ENCODE measurements at regions of chr3 and their contacts with region 1.

Region 1: GRCh38 chr3:112437146-112438022 is 61.9 kb downstream of the BTLA start:
- DNase-seq: peak in 2 of 4 experiments; percentile 4 to 12
- ATAC-seq: peak; percentile 85
- H3K4me3 ChIP-seq: no peak overlapping the region
- H3K27ac ChIP-seq: no peak overlapping the region
- H3K4me1 ChIP-seq: no peaks in the 10 kb centered on the region
- H3K27me3 ChIP-seq: no peaks in the 10 kb centered on the region
- CTCF ChIP-seq: peak; percentile 41 to 52 (median 51); a peak in 5 of 6 replicates
- EP300 ChIP-seq: no peak
- POLR2A ChIP-seq: no peak
- RAD21 ChIP-seq: peak in 1 of 2 experiments; percentile 49; a peak in 2 of 4 replicates

Region 2: GRCh38 chr3:112111785-112112402 is 325.5 kb before region 1 on chr3:
- CTCF ChIA-PET with region 1: no interaction called
- POLR2A ChIA-PET with region 1: no interaction called
- in situ Hi-C with region 1: no loop called
- intact Hi-C with region 1: loop called (anchors 5 kb)
- DNase-seq: peak; percentile 47 to 54 (median 50)
- ATAC-seq: peak; percentile 93
- H3K4me3 ChIP-seq: no peak overlapping the region
- H3K27ac ChIP-seq: no peak overlapping the region
- H3K4me1 ChIP-seq: no peaks in the 10 kb centered on the region
- H3K27me3 ChIP-seq: no peaks in the 10 kb centered on the region
- CTCF ChIP-seq: peak; percentile 57 to 72 (median 71)
- EP300 ChIP-seq: no peak
- POLR2A ChIP-seq: no peak
- RAD21 ChIP-seq: peak; percentile 66 to 70

Region 3: DNA sequence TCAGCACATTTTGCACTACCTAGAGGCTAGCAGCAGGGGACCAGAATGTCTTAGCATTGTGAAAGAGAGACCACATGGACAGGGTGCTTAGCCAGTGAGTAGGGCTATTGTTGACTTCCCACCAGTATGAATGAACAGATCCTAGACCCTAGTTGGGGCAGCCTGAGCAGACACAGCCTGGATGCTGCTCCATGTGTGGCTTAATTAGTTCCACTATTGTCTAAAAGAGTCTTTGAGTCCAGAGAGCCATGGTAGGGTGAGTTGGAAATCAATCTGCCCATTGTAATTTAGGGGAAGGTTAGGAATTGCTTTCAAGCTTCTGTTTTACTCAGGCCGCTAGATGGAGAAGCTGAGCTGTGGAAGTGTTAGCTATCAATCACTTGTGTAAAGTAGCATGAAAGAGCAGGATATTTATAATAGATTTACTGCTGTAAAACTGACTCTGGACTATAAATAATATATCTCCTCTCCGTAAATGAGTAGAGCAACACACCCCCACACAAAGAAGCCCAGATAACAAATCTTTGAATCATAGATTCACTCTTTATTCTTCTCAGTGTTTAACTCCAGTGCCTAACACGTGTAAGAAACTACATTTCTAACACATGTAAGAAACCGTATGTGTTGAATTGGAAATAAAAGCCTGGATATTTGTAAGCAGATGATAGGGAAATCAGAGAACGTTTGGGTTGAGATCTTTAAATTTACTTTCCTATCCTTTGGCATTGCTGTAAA is 300.3 kb before region 1 on chr3:
- CTCF ChIA-PET with region 1: no interaction called
- POLR2A ChIA-PET with region 1: no interaction called
- in situ Hi-C with region 1: no loop called
- intact Hi-C with region 1: loop called (anchors 2 kb)
- DNase-seq: peak in 2 of 4 experiments; percentile 8 to 42
- ATAC-seq: peak; percentile 72
- H3K4me3 ChIP-seq: no peak overlapping the region
- H3K27ac ChIP-seq: no peak overlapping the region
- H3K4me1 ChIP-seq: peaks cover 0 to 7% of the 10 kb centered on the region in 2 experiments; a peak in 1 of 5 replicates
- H3K27me3 ChIP-seq: no peaks in the 10 kb centered on the region
- CTCF ChIP-seq: peak; percentile 34 to 64 (median 51); a peak in 5 of 6 replicates
- EP300 ChIP-seq: no peak
- POLR2A ChIP-seq: no peak
- RAD21 ChIP-seq: peak in 1 of 2 experiments; percentile 63; a peak in 3 of 4 replicates

Region 4: DNA sequence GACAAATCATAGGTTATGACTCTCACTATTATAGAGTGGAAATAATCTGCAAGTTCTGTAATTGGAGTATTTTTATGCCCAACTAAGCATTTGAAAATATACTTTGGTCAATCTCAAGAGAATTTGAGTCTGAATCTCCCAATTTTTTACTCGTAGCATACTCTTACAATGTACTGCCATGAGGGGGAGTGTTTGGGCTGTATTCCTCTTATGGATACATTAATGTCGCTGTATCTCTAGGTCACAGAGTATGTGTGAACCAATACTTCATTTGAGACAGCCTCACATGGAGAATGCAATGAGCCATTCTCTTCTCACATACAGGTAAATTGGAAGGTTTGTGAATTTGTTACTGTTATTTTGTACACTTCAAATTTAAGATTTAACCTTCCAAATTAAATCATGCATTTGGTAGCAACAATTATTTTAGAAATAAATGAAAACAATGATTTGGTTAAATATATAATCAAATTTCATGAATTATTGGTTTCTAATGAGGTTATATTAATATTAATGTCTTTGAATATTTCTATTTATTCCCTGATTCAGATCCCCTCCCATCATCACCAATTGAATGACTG is 109.9 kb before region 1 on chr3:
- CTCF ChIA-PET with region 1: no interaction called
- POLR2A ChIA-PET with region 1: no interaction called
- in situ Hi-C with region 1: no loop called
- intact Hi-C with region 1: loop called (anchors 5 kb)
- DNase-seq: peak in 3 of 4 experiments; percentile 5 to 28 (median 6)
- ATAC-seq: peak; percentile 87
- H3K4me3 ChIP-seq: no peak overlapping the region
- H3K27ac ChIP-seq: no peak overlapping the region
- H3K4me1 ChIP-seq: no peaks in the 10 kb centered on the region
- H3K27me3 ChIP-seq: no peaks in the 10 kb centered on the region
- CTCF ChIP-seq: peak; percentile 34 to 55 (median 42); a peak in 3 of 6 replicates
- EP300 ChIP-seq: no peak
- POLR2A ChIP-seq: no peak
- RAD21 ChIP-seq: peak; percentile 36 to 67; a peak in 3 of 4 replicates

Measured in K562 (cell line).